H1 (cell line): ENCODE measurements at regions of chr7 and their contacts with region 1.

Region 1: GRCh38 chr7:73726083-73726466 is 6.6 kb upstream of the STX1A start:
- DNase-seq: no peak
- H3K4me3 ChIP-seq: no peak overlapping the region
- H3K27ac ChIP-seq: no peak overlapping the region
- H3K4me1 ChIP-seq: no peaks in the 10 kb centered on the region
- H3K27me3 ChIP-seq: no peaks in the 10 kb centered on the region; a peak in 1 of 7 replicates
- CTCF ChIP-seq: no peak
- EP300 ChIP-seq: no peak
- POLR2A ChIP-seq: no peak
- RAD21 ChIP-seq: no peak

Region 2: DNA sequence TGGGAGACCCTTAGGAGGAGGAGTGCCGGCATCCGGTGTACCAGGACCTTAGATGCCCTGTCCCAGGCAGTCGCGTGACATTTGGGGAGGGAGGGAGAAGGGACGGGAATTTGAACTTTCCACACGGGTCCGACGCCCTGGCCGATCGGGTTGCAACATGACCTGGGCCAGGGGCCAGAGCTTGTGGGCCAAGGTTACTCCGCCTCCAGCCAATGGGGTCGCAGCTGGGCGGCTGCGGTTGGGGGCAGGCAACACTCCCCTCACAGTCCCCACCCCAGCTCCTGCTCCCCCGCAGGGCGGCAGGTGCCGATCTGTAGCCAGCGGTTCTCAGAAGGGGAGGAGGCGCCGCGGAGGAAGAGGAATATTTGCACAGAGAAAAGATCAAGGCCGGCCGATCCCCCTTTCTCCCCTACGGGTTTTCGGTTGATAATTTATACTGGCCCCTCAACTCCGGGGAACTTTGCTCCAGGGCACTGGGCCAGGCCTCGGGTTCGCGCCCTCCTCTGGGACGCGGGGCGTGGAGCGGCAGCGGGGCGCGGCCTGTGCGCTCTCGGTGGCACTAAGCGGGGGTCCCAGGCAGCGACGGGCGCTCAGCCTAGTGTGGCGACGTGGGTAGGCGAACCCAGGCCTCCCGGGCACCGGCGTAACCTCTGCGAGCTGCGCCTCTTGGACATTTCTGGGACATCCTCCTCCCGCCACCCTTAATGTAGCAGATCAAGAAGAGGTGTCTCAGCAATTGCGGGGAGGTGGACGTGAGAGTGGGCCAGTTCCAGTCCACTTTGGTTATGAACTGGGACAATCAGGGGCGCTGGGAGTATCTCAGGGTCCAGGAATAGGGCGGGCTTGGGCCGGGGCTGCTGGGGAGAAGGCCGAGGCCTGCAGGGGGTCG is 102.9 kb before region 1 on chr7:
- CTCF ChIA-PET with region 1: interaction called, 10 read pairs
- POLR2A ChIA-PET with region 1: interaction called, 3 read pairs
- DNase-seq: peak; percentile 75 to 88
- H3K4me3 ChIP-seq: peak overlapping the region; percentile 48 to 86 (median 74)
- H3K27ac ChIP-seq: no peak overlapping the region
- H3K4me1 ChIP-seq: peaks cover 0 to 7% (median 5%) of the 10 kb centered on the region in 4 experiments; a peak in 6 of 7 replicates
- H3K27me3 ChIP-seq: peaks cover 0 to 12% (median 10%) of the 10 kb centered on the region in 4 experiments; a peak in 5 of 7 replicates
- CTCF ChIP-seq: 0 out of 4 replicates have a peak, but pooled peaks of 1 of the 3 experiments have one; percentile 1
- EP300 ChIP-seq: no peak
- POLR2A ChIP-seq: no peak
- RAD21 ChIP-seq: no peak

Region 3: GRCh38 chr7:73707142-73707595 is 18.9 kb before region 1 on chr7:
- CTCF ChIA-PET with region 1: interaction called, 45 read pairs
- POLR2A ChIA-PET with region 1: interaction called, 6 read pairs
- DNase-seq: peak in 1 of 2 experiments; percentile 49
- H3K4me3 ChIP-seq: no peak overlapping the region
- H3K27ac ChIP-seq: no peak overlapping the region
- H3K4me1 ChIP-seq: peaks cover 0 to 19% (median 15%) of the 10 kb centered on the region in 4 experiments; a peak in 6 of 7 replicates
- H3K27me3 ChIP-seq: no peaks in the 10 kb centered on the region; a peak in 1 of 7 replicates
- CTCF ChIP-seq: no peak
- EP300 ChIP-seq: no peak
- POLR2A ChIP-seq: no peak
- RAD21 ChIP-seq: no peak